Endothelial cell of umbilical vein (primary cell): ENCODE measurements at regions of chr1 and their contacts with region 1.

Region 1: DNA sequence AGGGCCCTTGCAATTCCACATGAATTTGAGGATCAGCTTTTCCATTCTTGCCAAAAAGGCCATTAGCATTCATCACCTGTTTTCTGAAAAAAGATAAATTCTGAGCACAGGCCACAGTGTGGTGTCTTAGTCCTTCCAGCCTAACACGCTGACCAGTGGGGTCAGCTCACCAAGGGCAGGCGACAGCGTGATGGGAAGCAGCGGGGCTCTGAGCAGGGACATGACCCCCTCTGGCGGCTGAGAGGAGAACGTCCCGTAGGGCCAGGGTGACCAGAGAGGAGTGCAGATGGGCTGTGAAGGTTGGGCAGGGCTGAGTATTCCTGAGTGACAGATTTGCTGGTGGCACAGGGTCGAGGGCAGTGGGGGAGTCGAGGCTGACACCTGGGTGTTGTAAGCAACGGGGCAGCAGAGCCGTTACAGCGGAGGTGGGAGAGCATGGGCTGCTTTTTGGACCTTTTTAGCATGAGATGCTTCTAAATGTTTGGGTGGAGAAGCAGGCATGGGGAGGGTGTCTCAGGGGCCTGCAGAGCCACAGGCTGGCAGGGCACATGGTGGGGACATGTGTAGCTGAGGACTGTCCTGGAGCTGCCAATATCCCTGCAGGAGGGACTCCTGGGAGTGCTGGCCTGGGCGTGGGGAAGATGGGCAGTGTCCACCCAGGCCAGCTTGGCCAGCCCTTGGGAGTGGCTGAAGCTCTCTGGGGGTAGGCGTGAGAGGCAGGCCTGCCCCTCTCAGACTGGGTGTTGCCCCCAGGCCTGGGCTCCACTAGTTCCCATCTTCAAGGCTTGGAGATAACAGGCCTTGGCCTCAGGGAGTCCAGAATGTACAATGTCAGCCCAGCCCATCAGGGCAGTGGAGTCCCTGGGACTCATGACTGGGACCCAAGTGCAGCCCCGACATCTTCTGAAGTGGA is 8.6 kb upstream of the CALML6 start:
- DNase-seq: peak; percentile 78
- H3K4me3 ChIP-seq: no peak overlapping the region
- H3K27ac ChIP-seq: no peak overlapping the region
- H3K4me1 ChIP-seq: peaks cover 11% of the 10 kb centered on the region
- H3K27me3 ChIP-seq: no peaks in the 10 kb centered on the region
- CTCF ChIP-seq: peak; percentile 97 to 98
- POLR2A ChIP-seq: no peak

Region 2: GRCh38 chr1:1788646-1789431 is 117.6 kb before region 1 on chr1:
- CTCF ChIA-PET with region 1: interaction called, 28 read pairs
- POLR2A ChIA-PET with region 1: no interaction called
- dilution Hi-C with region 1: no loop called
- intact Hi-C with region 1: loop called (anchors 1 kb)
- DNase-seq: no peak
- H3K4me3 ChIP-seq: no peak overlapping the region
- H3K27ac ChIP-seq: no peak overlapping the region
- H3K4me1 ChIP-seq: no peaks in the 10 kb centered on the region
- H3K27me3 ChIP-seq: no peaks in the 10 kb centered on the region
- CTCF ChIP-seq: peak; percentile 16 to 44
- POLR2A ChIP-seq: no peak

Region 3: DNA sequence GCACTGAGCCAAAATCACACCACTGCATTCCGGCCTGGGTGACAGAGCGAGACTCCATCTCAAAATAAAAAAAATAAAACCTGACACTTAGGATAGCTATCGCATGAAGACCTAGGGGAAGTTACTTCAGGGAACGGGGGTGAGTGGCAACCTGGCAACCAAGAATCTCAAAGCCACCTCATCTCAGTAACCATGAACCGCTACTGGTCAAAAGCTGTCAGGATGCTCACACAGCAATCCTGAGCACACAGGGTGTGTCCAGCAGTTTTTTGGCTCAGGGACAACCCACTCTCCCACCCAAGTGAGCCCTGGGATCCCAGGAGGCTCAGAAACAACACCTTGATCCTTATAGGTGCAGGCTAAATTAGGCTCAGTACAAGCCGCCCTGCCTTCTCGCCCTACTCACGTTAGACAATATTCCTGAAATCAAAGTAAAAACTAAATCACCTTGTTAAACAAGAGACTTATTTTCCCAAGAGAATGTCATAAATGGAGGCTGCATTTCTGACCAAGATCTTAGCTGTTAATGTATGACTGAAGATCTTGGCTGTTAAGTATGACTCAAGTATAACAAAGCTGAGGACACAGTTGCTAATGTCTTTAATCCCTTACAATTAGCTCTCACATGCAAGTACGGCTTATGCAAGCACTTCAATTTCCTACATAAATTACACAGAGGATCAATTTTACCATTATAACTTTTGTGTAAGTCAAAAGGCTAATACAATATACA is 79.9 kb before region 1 on chr1:
- CTCF ChIA-PET with region 1: interaction called, 8 read pairs
- POLR2A ChIA-PET with region 1: interaction called, 7 read pairs
- dilution Hi-C with region 1: no loop called
- intact Hi-C with region 1: loop called (anchors 5 kb)
- DNase-seq: no peak
- H3K4me3 ChIP-seq: no peak overlapping the region
- H3K27ac ChIP-seq: no peak overlapping the region
- H3K4me1 ChIP-seq: no peaks in the 10 kb centered on the region
- H3K27me3 ChIP-seq: no peaks in the 10 kb centered on the region
- CTCF ChIP-seq: no peak
- POLR2A ChIP-seq: no peak

Region 4: DNA sequence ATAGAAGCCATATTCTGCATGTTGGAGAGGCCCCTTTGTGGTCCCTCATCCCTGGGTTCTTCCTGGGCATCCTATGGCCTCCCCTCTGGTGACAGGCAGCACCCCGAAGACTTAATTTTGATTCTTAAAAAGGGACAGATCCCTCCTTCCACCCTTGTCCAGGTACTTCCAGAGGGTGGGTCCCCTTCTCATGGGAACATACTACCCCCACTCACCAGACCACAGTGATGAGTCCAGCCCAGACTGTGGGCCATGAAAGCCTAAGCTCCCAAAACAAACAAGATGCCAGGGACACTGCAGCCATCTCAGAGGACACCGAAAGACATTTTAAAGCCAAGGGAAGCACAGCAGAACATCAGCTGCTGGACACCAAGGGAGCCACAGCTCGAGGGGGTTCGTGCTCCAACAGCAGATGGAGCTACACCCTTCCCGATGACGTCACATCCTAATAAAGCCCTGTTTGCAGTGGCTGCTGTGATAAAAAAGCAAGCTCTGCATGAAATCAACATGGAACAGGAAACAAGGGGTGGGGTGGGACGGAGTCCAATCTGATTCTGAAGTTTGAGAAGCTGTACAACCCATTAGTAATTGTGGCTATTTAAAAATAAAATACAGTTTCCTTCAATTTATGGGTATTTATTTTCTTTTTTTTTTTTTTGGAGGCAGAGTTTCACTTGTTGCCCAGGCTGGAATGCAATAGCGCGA is 47.9 kb before region 1 on chr1:
- CTCF ChIA-PET with region 1: interaction called, 26 read pairs
- POLR2A ChIA-PET with region 1: no interaction called
- dilution Hi-C with region 1: no loop called
- intact Hi-C with region 1: loop called (anchors 1 kb)
- DNase-seq: peak; percentile 98
- H3K4me3 ChIP-seq: no peak overlapping the region
- H3K27ac ChIP-seq: peak overlapping the region; percentile 77
- H3K4me1 ChIP-seq: peaks cover 28% of the 10 kb centered on the region
- H3K27me3 ChIP-seq: no peaks in the 10 kb centered on the region
- CTCF ChIP-seq: peak; percentile 37 to 65
- POLR2A ChIP-seq: no peak

Region 5: DNA sequence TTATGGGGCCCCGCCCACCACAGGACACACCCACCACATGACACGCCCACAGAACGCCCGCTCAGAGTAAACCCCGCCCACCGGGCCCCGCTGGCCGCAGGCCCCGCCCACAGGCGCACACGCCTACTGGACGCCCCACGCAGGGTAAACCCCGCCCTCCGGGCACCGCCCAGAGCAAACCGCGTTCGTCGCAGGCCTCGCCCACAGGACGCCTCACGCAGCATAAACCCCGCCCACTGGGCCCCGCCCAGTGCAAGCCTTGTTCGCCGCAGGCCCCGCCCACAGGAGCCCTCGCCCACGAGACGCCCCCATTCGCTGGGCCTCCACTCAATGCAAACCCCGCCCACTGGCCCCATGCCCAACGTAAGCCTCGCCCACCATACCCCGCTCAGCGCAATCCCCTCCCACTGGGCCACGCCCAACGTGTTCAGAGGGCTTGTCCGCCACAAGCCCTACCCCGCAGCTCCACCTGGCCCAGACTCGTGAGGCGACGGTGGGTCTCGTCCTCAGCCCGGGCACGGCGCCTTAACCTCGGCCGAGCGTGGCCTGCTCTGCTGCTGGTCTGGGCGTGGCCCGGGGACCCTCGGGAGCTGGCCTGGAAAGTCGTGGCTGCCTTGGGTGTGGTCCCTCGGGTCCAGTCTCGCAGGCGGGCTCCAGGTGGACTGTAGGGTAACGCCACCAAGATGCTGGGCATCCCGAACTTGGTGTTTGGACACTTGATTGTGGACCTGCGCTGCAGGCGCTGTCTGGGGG is 13.0 kb after region 1 on chr1:
- CTCF ChIA-PET with region 1: interaction called, 7 read pairs
- POLR2A ChIA-PET with region 1: no interaction called
- dilution Hi-C with region 1: no loop called
- intact Hi-C with region 1: loop called (anchors 1 kb)
- DNase-seq: peak; percentile 98
- H3K4me3 ChIP-seq: peak overlapping the region in 2 of 3 experiments; percentile 40 to 42
- H3K27ac ChIP-seq: no peak overlapping the region
- H3K4me1 ChIP-seq: peaks cover 5% of the 10 kb centered on the region
- H3K27me3 ChIP-seq: no peaks in the 10 kb centered on the region
- CTCF ChIP-seq: no peak
- POLR2A ChIP-seq: no peak